Mammary epithelial cell (primary cell): ENCODE measurements at regions of chr18 and their contacts with region 1.

Region 1: DNA sequence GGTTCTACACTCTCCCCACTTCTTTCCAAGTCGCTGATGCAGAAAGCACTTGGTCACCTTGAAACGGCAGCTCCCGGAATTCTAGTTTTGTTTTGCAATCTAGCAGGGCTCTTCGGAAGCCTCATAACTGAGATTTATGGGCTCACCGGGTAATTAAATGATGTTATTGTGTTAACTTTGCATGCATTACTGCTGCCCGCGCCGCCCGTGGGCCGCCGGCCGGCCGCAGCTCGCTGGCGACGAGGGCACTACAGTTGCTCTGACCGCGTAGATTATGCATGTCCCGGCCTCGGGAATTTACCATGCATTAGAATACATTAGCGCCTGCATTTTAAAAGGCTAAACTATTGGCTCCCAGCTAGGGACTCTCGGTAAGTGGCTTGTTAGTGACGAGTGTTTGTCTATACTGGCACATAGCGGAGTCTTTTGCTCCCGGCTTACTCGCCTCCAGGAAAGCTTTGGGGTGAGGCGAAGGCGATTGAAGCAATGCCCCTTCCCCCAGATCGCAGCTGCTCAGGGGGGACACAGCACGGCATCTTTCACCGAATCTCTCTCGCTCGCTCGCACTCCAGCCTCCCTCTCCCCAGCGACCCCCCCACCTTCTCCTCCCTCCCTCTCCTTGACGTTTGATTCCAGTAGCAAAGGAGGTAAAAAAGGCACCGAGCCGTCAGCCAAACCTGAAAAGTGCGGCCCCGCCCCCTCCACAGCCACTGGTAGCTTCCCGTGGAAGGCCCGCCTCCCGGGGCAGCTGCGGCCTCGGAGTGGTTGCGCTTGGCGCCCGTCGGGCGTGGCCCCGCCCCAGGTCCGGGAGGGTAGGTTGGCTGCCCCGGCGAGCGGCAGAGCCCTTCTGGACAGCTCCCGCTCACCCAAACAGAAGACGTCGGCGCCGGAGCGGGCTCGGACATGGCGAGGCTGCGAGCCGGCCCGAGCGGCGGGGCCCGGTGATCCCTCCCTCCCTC is at the start of gene ONECUT2:
- DNase-seq: peak; percentile 91
- H3K4me3 ChIP-seq: peak within 1 kb of the TSS; percentile 40 to 58 (median 42)
- H3K27ac ChIP-seq: no peak within 1 kb of the TSS
- H3K4me1 ChIP-seq: peaks cover 22% of the 10 kb centered on the region
- H3K27me3 ChIP-seq: peaks cover 81% of the 10 kb centered on the region
- CTCF ChIP-seq: no peak
- total RNA-seq, gene ONECUT2: under 0.01 to 0.31 TPM

Region 2: DNA sequence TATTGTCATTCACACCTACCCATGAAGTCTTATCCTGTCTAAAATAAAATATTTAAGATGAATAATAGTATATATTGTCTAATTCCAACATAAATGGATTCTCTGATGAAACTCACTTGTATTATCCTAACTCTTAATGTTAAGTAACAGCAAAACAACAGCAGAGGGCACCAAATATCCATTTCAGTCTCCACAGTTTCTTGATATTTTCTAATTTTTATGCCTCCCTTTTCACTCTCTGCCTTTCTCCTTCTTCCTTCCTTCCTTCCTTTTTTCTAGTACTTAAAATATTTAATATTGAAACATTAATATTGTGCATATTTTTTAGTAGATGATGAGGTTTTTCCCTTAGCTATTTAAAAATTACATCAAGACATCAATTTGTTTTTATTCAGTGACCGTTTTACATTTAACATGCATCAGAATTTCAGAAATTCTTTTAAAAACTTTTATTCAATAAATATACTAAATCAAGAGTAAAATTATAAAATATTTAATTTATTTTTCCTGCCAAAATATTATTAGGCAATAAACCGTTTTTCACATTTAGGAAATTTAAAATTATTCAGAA is 686.0 kb before region 1 on chr18:
- CTCF ChIA-PET with region 1: no interaction called
- dilution Hi-C with region 1: no loop called
- in situ Hi-C with region 1: no loop called
- intact Hi-C with region 1: loop called (anchors 2 kb)
- DNase-seq: peak; percentile 4
- H3K4me3 ChIP-seq: no peak overlapping the region
- H3K27ac ChIP-seq: no peak overlapping the region
- H3K4me1 ChIP-seq: no peaks in the 10 kb centered on the region
- H3K27me3 ChIP-seq: no peaks in the 10 kb centered on the region
- CTCF ChIP-seq: peak; percentile 45 to 57

Region 3: GRCh38 chr18:56869189-56869777 is 565.5 kb before region 1 on chr18:
- CTCF ChIA-PET with region 1: no interaction called
- dilution Hi-C with region 1: no loop called
- in situ Hi-C with region 1: no loop called
- intact Hi-C with region 1: loop called (anchors 2 kb)
- DNase-seq: peak; percentile 25
- H3K4me3 ChIP-seq: no peak overlapping the region
- H3K27ac ChIP-seq: no peak overlapping the region
- H3K4me1 ChIP-seq: no peaks in the 10 kb centered on the region
- H3K27me3 ChIP-seq: no peaks in the 10 kb centered on the region
- CTCF ChIP-seq: peak; percentile 79 to 80

Region 4: GRCh38 chr18:57202881-57203280 is 231.9 kb before region 1 on chr18:
- CTCF ChIA-PET with region 1: no interaction called
- dilution Hi-C with region 1: no loop called
- in situ Hi-C with region 1: no loop called
- intact Hi-C with region 1: loop called (anchors 5 kb)
- DNase-seq: no peak
- H3K4me3 ChIP-seq: no peak overlapping the region
- H3K27ac ChIP-seq: no peak overlapping the region
- H3K4me1 ChIP-seq: no peaks in the 10 kb centered on the region
- H3K27me3 ChIP-seq: peaks cover 3% of the 10 kb centered on the region
- CTCF ChIP-seq: no peak

Region 5: GRCh38 chr18:57223144-57223870 is 211.5 kb before region 1 on chr18:
- CTCF ChIA-PET with region 1: no interaction called
- dilution Hi-C with region 1: no loop called
- in situ Hi-C with region 1: no loop called
- intact Hi-C with region 1: no loop called
- DNase-seq: peak; percentile 56
- H3K4me3 ChIP-seq: no peak overlapping the region
- H3K27ac ChIP-seq: peak overlapping the region; percentile 22
- H3K4me1 ChIP-seq: peaks cover 7% of the 10 kb centered on the region
- H3K27me3 ChIP-seq: no peaks in the 10 kb centered on the region
- CTCF ChIP-seq: no peak

Region 6: DNA sequence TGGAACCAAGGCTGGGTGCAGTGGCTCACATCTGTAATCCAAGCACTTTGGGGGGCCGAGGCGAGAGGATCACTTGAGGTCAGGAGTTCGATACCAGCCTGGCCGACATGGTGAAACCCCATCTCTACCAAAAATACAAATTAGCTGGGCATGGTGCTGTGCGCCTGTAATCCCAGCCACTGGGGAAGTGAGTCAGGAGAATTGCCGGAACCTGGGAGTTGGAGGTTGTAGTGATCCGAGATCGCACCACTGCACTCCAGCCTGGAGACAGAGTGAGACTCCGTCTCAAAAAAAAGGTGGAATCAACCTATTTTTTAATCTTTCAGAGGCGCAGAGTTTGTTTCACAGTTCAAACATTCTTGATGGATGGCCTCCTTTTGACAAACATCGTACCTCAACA is 392.8 kb after region 1 on chr18:
- CTCF ChIA-PET with region 1: no interaction called
- dilution Hi-C with region 1: no loop called
- in situ Hi-C with region 1: no loop called
- intact Hi-C with region 1: no loop called
- DNase-seq: no peak
- H3K4me3 ChIP-seq: no peak overlapping the region
- H3K27ac ChIP-seq: no peak overlapping the region
- H3K4me1 ChIP-seq: no peaks in the 10 kb centered on the region
- H3K27me3 ChIP-seq: no peaks in the 10 kb centered on the region
- CTCF ChIP-seq: no peak